Prostate gland (tissue), 2 donors: ENCODE measurements at regions of chr13 and their contacts with region 1.

Region 1: DNA sequence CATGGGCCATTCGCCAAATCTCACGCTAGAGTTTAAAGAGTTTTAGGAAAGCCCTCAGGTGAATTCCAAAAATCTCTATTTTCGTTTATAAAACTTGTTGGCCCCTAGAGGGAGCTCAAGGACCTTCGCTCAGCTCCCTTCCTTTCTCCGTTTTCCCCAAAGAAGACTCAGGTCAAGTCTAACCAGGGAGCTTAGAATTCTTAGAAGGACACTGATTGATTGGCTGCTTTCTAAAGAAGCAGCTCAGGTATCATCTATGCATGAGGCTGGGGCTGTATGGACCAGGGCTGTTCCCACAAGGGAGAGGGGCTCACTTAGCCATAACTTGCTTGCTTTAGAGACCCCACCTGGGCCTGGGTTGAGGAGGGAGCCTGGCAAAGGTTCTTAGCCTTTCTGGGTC is 20.5 kb downstream of the DZIP1 start:
- DNase-seq: no peak
- H3K4me3 ChIP-seq: no peak overlapping the region
- H3K27ac ChIP-seq: no peak overlapping the region
- H3K4me1 ChIP-seq: peaks cover 8% of the 10 kb centered on the region
- H3K27me3 ChIP-seq: no peaks in the 10 kb centered on the region
- CTCF ChIP-seq: peak in 3 of 4 experiments; percentile 57 to 61 (median 57)
- POLR2A ChIP-seq: no peak

Region 2: GRCh38 chr13:94764576-94765321 is 859.3 kb before region 1 on chr13:
- intact Hi-C with region 1: no loop called
- DNase-seq: no peak
- H3K4me3 ChIP-seq: no peak overlapping the region
- H3K27ac ChIP-seq: no peak overlapping the region
- H3K4me1 ChIP-seq: no peaks in the 10 kb centered on the region
- H3K27me3 ChIP-seq: no peaks in the 10 kb centered on the region
- CTCF ChIP-seq: no peak
- POLR2A ChIP-seq: no peak

Region 3: DNA sequence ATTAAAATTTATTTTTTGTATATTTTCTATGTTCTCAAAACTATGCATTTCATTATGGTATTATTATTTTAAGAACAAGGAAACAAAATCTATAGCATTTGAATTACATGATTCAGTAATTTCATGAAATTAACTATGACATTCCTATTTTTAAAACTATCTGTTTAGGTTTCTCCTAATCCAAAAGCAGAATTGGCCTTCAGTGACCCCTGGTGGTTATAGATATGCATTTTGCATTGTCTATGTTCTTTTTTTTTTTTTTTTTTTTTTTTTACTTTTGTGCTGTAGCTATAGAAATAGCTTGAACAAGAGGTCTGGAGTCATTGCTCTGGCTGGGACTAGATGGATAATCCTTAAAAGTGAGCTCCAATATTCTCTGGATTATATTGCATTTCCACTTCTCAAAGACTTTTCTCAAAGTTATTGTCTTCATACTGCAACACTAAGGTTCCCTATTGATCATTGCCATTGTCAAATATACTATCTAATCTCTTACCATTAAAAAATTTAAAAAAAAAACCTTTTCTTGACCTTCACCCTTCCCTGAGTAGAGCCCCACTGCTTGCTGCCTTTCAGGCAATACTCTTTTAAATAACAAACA is 37.1 kb after region 1 on chr13:
- intact Hi-C with region 1: loop called (anchors 5 kb)
- DNase-seq: no peak
- H3K4me3 ChIP-seq: no peak overlapping the region
- H3K27ac ChIP-seq: no peak overlapping the region
- H3K4me1 ChIP-seq: no peaks in the 10 kb centered on the region
- H3K27me3 ChIP-seq: no peaks in the 10 kb centered on the region
- CTCF ChIP-seq: peak in 3 of 4 experiments; percentile 11 to 47 (median 45)
- POLR2A ChIP-seq: no peak

Region 4: GRCh38 chr13:95834134-95834765 is 210.2 kb after region 1 on chr13:
- intact Hi-C with region 1: loop called (anchors 2 kb)
- DNase-seq: peak; percentile 29
- H3K4me3 ChIP-seq: no peak overlapping the region
- H3K27ac ChIP-seq: no peak overlapping the region
- H3K4me1 ChIP-seq: no peaks in the 10 kb centered on the region
- H3K27me3 ChIP-seq: no peaks in the 10 kb centered on the region
- CTCF ChIP-seq: peak; percentile 81 to 91 (median 87)
- POLR2A ChIP-seq: no peak